Activated CD8-positive, alpha-beta T cell treated with anti-CD3 and anti-CD28 coated beads for 36 hours (primary cell): ENCODE measurements at regions of chr1 and their contacts with region 1.

Region 1: DNA sequence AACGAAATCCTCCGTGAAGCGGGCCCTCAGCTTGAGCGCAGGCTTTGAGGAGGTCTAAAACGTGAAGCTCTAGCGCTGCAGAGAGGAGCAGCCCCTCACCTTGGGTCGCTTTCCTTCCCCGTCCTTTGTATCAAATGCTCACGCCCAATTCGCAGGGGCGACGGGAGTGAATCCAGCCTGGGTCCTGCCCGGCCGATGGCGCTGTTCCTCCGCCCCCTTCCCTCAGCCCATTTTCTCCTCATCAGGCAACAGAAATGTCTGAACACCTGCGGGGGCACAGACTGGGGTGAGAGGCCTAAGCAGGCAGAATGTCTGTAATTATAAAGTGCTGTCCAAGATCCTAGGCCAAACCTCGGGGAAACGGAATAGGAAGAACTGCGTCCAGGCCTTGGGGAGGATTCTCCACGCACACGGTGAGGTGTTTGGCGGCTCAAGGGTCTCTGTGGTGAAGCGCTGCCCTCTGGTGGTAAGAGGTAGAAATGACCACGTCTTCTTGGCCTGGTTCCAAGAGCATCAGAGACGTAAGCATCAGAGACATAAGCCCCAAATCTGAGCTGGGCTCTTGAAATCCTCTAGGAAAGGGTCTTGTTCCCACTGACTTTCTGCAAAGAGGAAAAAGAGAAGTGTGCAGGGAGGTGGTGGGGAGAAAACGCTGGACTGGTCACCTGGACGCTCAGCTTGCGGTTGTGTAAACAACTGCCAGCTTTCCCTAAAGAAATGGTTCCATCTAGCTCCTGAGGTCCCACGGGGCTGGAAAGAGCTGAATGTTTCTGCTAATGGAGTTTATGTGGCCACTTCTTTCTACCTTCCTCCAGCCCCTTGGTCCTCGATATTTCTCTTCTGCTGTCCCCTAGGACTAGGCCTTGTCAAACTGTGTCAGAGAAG is 92.1 kb upstream of the CD53 start:
- DNase-seq: peak; percentile 85
- ATAC-seq: peak; percentile 80
- H3K4me3 Mint-ChIP-seq: peak overlapping the region; percentile 26
- H3K27ac Mint-ChIP-seq: no peak overlapping the region
- H3K4me1 Mint-ChIP-seq: peaks cover 33% of the 10 kb centered on the region
- H3K27me3 Mint-ChIP-seq: peaks cover 2% of the 10 kb centered on the region
- CTCF ChIP-seq: peak; percentile 79

Region 2: GRCh38 chr1:110554871-110555801 is 225.7 kb before region 1 on chr1:
- CTCF ChIA-PET with region 1: interaction called, 42 read pairs
- POLR2A ChIA-PET with region 1: no interaction called
- intact Hi-C with region 1: no loop called
- DNase-seq: peak; percentile 65
- ATAC-seq: peak; percentile 92
- H3K4me3 Mint-ChIP-seq: peak overlapping the region; percentile 13
- H3K27ac Mint-ChIP-seq: no peak overlapping the region
- H3K4me1 Mint-ChIP-seq: no peaks in the 10 kb centered on the region
- H3K27me3 Mint-ChIP-seq: peaks cover 29% of the 10 kb centered on the region
- CTCF ChIP-seq: peak; percentile 83

Region 3: DNA sequence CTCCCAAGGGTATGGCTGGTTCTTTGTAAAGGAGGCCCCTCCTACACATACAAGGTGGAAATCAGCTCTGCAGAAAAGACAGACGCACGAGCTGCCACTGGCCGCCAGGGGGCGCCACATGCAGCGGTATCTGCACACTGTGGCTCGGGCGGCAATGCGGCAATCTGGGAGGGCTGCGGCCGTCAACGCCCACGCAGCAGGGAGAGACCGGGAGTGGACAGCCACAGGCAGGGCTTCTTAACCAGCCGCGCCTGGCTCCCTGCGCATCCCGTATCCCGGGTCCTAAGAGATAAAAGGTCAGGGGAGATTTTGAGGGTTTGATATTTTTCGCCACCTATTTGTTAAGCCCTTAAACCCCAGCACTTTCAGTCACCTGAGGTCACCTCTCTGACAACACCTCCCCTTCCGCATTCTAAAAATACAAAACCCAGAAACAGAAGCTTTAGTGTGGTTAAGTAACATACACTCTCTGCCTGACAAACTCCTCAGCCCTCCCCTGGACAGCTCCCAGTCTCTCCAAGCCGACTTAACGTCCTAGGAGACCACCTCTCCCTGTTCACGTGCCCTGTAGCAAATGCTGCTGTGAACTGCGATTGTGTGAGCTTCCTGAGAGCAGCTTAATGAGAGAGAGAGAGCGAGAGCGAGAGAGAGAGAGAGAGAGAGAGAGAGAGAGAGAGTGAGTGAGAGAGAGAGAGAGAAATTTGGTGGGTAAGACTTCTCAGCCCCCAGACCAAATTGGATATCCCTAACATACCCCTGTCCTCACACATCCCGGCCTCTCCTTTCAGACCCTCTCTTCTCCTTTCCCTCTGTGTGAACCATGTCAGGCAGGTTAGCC is 161.2 kb before region 1 on chr1:
- CTCF ChIA-PET with region 1: interaction called, 196 read pairs
- POLR2A ChIA-PET with region 1: interaction called, 6 read pairs
- intact Hi-C with region 1: loop called (anchors 2 kb)
- DNase-seq: peak; percentile 91
- ATAC-seq: peak; percentile 90
- H3K4me3 Mint-ChIP-seq: peak overlapping the region; percentile 76
- H3K27ac Mint-ChIP-seq: peak overlapping the region; percentile 77
- H3K4me1 Mint-ChIP-seq: peaks cover 27% of the 10 kb centered on the region
- H3K27me3 Mint-ChIP-seq: no peaks in the 10 kb centered on the region
- CTCF ChIP-seq: peak; percentile 94

Region 4: DNA sequence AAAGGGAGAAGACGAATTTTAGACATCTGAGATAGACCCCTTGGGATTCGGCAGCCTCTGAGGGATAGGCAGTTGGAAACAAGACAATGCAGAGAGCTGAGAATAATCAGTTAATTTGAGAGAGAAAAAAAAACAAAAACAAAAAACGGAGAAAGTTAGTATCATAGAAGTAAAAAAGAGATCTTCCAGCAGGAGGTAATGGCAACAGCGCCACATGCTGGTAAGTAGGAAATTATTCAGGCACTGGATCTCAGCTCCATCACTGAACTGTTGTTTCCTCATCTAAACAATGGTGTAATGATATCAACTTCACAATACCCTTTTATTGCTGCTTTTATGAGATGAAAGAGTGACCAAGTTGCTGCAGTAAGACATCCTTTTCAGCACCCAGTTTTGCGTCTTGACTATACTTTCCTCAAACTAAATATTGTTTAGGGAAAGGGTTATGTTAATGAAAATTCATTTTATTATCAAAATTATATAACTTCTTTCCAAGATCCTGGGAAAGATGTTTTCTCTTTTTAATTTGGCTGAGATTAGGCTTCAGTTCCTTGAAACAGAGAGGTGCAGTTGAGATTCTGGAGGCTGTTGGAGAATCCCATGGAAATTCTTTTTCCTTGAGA is 14.7 kb before region 1 on chr1:
- CTCF ChIA-PET with region 1: interaction called, 44 read pairs
- POLR2A ChIA-PET with region 1: interaction called, 3 read pairs
- intact Hi-C with region 1: no loop called
- DNase-seq: peak; percentile 75
- ATAC-seq: peak; percentile 76
- H3K4me3 Mint-ChIP-seq: no peak overlapping the region
- H3K27ac Mint-ChIP-seq: no peak overlapping the region
- H3K4me1 Mint-ChIP-seq: peaks cover 1% of the 10 kb centered on the region
- H3K27me3 Mint-ChIP-seq: peaks cover 2% of the 10 kb centered on the region
- CTCF ChIP-seq: peak; percentile 90

Region 5: DNA sequence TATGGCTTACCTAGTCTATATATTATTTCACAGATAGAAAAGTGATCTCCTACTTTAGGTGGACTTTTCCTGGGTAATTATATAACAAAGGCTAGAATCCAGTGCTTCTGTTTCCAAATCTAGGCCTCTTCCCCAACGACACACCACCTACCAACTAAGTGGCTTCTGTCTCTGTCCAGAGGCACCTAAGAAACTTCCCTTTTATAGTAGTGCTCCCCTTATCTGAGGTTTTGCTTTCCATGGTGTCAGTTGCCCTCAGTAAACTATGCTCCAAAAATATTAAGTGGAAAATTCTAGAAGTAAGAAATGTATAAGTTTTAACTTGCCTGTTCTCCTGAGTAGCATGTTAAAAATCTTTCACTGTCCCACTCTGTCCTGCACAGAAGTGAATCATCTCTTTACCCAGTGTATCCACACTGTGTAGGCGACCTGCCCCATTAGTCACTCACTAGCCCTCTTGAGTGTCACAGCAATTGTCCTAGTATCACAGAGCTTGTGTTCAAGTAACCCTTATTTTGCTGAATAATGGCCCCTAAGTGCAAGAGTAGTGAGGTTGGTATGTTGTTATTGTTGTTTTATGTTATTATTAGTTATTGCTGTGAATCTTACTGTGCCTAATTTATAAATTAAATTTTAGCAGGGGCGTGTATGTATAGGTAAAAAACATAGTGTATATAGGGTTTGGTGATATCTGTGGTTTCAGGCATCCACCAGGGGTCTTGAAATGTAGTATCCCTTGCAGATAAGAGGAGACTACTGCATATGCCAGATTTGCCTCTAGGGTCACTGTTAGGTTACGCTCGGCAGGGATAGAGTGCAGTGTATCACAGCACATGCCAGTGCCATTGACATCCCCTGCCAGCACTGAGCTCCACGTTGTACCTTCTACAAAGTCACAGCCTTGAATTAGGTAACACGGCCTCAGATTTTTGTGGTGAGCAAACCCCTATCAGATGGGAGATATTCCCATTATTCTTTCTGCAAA is 77.4 kb after region 1 on chr1:
- CTCF ChIA-PET with region 1: interaction called, 11 read pairs
- POLR2A ChIA-PET with region 1: no interaction called
- intact Hi-C with region 1: no loop called
- DNase-seq: peak; percentile 35
- ATAC-seq: peak; percentile 90
- H3K4me3 Mint-ChIP-seq: no peak overlapping the region
- H3K27ac Mint-ChIP-seq: no peak overlapping the region
- H3K4me1 Mint-ChIP-seq: peaks cover 32% of the 10 kb centered on the region
- H3K27me3 Mint-ChIP-seq: no peaks in the 10 kb centered on the region
- CTCF ChIP-seq: no peak

Region 6: GRCh38 chr1:110897681-110898080 is 116.8 kb after region 1 on chr1:
- CTCF ChIA-PET with region 1: no interaction called
- POLR2A ChIA-PET with region 1: no interaction called
- intact Hi-C with region 1: no loop called
- DNase-seq: no peak
- ATAC-seq: peak; percentile 34
- H3K4me3 Mint-ChIP-seq: no peak overlapping the region
- H3K27ac Mint-ChIP-seq: peak overlapping the region; percentile 92
- H3K4me1 Mint-ChIP-seq: peaks cover 65% of the 10 kb centered on the region
- H3K27me3 Mint-ChIP-seq: no peaks in the 10 kb centered on the region
- CTCF ChIP-seq: no peak